Activated CD8-positive, alpha-beta memory T cell treated with anti-CD3 and anti-CD28 coated beads, Interleukin-2, amount 10 ng/mL, durations not matched to agents 7 days and 5 days (primary cell): ENCODE measurements at regions of chr14 and their contacts with region 1.

Region 1: DNA sequence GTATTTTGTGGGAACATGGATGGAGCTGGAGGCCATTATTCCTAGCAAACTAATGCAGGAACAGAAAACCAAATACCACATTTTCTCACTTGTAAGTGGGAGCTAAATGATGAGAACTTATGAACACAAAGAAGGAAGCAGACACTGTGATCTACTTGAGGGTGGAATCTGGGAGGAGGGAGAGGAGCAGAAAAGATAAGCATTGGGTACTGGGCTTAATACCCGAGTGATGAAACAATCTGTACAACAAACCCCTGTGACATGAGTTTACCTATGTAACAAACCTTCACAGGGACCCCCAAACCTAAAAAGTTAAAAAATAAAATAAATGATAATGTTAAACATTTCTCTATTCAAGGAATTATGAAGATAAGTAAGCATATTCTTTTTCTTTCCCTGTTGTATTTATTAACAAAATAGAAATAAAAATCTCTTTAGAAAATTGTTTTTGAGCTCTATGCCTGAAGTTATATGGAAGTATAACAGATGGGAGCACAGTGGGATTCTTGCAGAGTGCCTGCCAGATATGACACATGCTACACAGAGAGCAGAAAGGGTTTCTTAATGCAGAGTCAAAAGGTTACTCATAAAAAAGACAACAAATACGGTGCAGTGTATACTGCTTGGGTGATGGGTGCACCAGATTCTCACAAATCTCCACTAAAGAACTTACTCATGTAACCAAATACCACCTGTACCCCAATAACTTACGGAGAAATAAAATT is 52.0 kb upstream of the SYNE2 start:
- DNase-seq: no peak
- ATAC-seq: no peak
- H3K4me3 Mint-ChIP-seq: no peak overlapping the region
- H3K27ac Mint-ChIP-seq: no peak overlapping the region
- H3K4me1 Mint-ChIP-seq: peaks cover 10% of the 10 kb centered on the region
- H3K27me3 Mint-ChIP-seq: peaks cover 11% of the 10 kb centered on the region

Region 2: DNA sequence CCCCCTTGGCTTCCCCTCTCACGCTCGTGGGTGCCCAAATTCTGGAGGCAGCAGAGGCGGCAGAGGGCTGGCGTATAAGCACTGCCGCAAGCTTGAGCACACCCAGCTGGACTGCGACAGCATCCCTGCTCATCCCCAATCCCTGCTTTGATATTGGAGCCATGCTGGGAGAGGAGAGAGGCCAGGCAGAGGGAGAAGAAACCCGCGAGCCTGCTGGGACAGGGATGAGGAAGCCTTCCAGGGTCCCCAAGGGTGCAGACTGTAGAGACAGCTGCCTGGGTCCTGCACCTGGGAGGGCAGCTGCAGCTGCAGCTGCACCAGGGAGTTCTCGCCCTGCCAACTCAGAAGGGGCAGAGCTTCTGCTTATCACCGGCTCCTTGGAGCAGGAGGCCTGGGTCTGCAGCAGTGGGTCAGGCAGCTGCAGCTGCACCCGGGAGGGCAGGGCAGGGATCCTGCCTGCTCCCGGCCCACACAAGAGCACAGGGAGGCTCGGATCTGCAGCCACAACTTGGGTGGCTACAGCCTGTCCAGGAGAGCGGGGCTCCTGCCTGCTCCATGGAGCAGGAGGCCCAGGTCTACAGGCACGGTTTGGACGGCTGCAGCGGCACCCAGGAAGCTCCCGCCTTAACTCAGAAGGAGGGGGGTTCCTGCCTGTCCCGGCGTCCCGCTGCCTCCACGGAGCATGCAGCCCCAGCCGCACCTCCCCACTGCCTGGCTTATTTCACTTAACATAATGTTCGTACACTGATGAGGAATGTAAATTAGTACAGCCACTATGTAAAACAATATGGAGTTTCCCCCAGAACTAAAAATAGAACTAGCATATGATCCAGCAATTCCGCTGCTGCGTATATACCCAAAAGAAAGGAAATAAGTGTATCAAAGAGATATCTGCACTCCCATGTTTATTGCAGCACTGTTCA is 12.5 kb before region 1 on chr14:
- CTCF ChIA-PET with region 1: no interaction called
- DNase-seq: no peak
- ATAC-seq: no peak
- H3K4me3 Mint-ChIP-seq: no peak overlapping the region
- H3K27ac Mint-ChIP-seq: no peak overlapping the region
- H3K4me1 Mint-ChIP-seq: no peaks in the 10 kb centered on the region
- H3K27me3 Mint-ChIP-seq: peaks cover 29% of the 10 kb centered on the region

Region 3: DNA sequence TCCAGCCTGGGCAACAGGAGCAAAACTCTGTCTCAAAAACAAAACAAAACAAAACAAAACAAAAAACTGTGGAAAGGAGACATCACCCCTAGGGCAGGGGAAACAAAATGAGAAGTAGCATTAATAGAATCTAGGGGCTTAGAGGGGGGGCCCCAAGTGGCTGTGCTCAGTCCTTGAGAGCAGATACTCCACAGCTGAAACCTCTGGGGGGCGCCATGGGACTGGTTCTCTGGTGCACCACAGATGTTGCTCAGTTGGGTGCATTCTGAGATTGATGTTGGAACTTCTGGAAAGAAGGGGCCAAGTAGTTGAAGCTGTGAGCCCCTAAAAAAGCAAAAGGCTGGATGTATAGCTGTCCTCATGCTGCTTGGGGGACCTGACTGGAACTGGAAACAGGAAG is 40.2 kb after region 1 on chr14:
- CTCF ChIA-PET with region 1: no interaction called
- DNase-seq: peak; percentile 68
- ATAC-seq: peak; percentile 30
- H3K4me3 Mint-ChIP-seq: no peak overlapping the region
- H3K27ac Mint-ChIP-seq: no peak overlapping the region
- H3K4me1 Mint-ChIP-seq: peaks cover 4% of the 10 kb centered on the region
- H3K27me3 Mint-ChIP-seq: no peaks in the 10 kb centered on the region

Region 4: GRCh38 chr14:64294672-64295413 is 494.0 kb after region 1 on chr14:
- CTCF ChIA-PET with region 1: interaction called, 19 read pairs
- DNase-seq: peak; percentile 90
- ATAC-seq: peak; percentile 88
- H3K4me3 Mint-ChIP-seq: peak overlapping the region; percentile 60
- H3K27ac Mint-ChIP-seq: peak overlapping the region; percentile 8
- H3K4me1 Mint-ChIP-seq: peaks cover 30% of the 10 kb centered on the region
- H3K27me3 Mint-ChIP-seq: peaks cover 36% of the 10 kb centered on the region

Region 5: GRCh38 chr14:64303471-64303917 is 502.7 kb after region 1 on chr14:
- CTCF ChIA-PET with region 1: interaction called, 31 read pairs
- DNase-seq: no peak
- ATAC-seq: peak; percentile 53
- H3K4me3 Mint-ChIP-seq: no peak overlapping the region
- H3K27ac Mint-ChIP-seq: no peak overlapping the region
- H3K4me1 Mint-ChIP-seq: peaks cover 4% of the 10 kb centered on the region
- H3K27me3 Mint-ChIP-seq: peaks cover 12% of the 10 kb centered on the region